Ascending aorta (tissue), 2 donors: ENCODE measurements at regions of chr14 and their contacts with region 1.

Region 1: GRCh38 chr14:32430326-32430725 is 101.2 kb downstream of the AKAP6 start:
- DNase-seq: no peak
- H3K4me3 ChIP-seq: no peak overlapping the region
- H3K27ac ChIP-seq: peak overlapping the region in 1 of 2 donors; percentile 85
- H3K4me1 ChIP-seq: peaks cover 0 to 4% of the 10 kb centered on the region in 2 donors
- H3K27me3 ChIP-seq: no peaks in the 10 kb centered on the region
- CTCF ChIP-seq: no peak

Region 2: DNA sequence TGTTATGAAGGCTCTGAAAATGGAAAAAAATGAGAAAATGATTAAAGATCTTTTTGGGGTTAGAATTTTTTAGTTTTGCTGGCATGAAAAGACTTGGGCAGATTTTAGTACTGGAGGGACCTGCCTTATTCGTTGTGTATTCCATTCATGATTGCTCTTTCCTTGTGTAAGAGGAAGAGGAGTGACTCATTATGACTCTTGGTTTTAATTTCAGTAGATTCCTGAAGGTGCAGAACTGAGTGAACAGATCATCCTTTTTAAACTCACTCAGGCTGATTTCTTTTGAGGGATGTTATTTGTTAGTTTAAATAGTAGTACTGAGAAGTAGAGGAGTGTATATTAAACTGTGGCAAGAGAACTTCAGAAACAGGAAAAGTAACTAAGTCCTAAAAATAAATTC is 59.6 kb before region 1 on chr14:
- intact Hi-C with region 1: loop called (anchors 5 kb)
- DNase-seq: no peak
- H3K4me3 ChIP-seq: no peak overlapping the region
- H3K27ac ChIP-seq: no peak overlapping the region
- H3K4me1 ChIP-seq: peaks cover 0 to 21% of the 10 kb centered on the region in 2 donors
- H3K27me3 ChIP-seq: no peaks in the 10 kb centered on the region
- CTCF ChIP-seq: no peak

Region 3: GRCh38 chr14:32417956-32418552 is 12.3 kb before region 1 on chr14:
- intact Hi-C with region 1: loop called (anchors 2 kb)
- DNase-seq: peak in 1 of 2 donors; percentile 72
- H3K4me3 ChIP-seq: no peak overlapping the region
- H3K27ac ChIP-seq: peak overlapping the region in 1 of 2 donors; percentile 13
- H3K4me1 ChIP-seq: peaks cover 0 to 12% of the 10 kb centered on the region in 2 donors
- H3K27me3 ChIP-seq: no peaks in the 10 kb centered on the region
- CTCF ChIP-seq: no peak

Region 4: GRCh38 chr14:32469388-32470160 is 39.2 kb after region 1 on chr14:
- intact Hi-C with region 1: loop called (anchors 5 kb)
- DNase-seq: no peak
- H3K4me3 ChIP-seq: no peak overlapping the region
- H3K27ac ChIP-seq: peak overlapping the region; percentile 65 to 83
- H3K4me1 ChIP-seq: peaks cover 5 to 35% of the 10 kb centered on the region in 2 donors
- H3K27me3 ChIP-seq: no peaks in the 10 kb centered on the region
- CTCF ChIP-seq: peak; percentile 23 to 59 (median 51)

Region 5: GRCh38 chr14:32495435-32495734 is 65.1 kb after region 1 on chr14:
- intact Hi-C with region 1: no loop called
- DNase-seq: no peak
- H3K4me3 ChIP-seq: peak overlapping the region; percentile 27 to 34
- H3K27ac ChIP-seq: peak overlapping the region; percentile 68 to 76
- H3K4me1 ChIP-seq: peaks cover 0 to 49% of the 10 kb centered on the region in 2 donors
- H3K27me3 ChIP-seq: no peaks in the 10 kb centered on the region
- CTCF ChIP-seq: no peak

Region 6: DNA sequence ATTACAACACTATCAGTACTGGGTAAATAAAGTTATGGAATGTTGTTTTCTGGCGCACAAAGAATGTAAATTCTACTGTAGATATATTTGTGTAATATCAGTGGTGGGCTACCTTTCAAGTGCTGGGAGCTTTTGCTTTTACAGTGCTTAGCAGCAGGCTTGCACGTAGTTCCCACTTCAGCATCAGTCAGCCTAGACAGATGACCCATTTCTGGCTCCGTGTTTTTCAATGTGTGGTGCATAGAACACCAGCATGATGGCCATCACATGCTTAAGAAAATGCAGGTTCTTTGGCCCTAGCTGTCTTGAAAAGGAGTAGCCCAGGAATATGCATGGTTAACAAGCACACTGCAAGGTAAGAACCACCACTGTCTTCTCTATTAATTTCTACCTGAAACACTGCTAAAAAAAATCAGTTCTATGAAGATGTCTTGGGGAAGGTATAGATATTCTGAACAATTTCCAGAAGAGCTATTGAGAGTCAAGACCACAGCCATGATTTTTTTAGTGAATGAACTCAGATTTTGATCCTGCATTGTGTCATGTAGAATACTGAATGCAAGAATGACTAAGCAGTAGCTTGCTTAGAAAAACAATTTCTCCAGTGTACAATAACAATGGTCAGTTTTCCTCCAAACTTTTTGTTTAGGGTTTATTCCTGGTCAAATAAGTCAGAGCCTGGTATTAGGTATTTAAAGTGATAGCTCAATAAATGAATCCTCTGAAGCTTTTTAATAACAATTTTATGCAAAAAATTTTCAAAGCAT is 94.5 kb after region 1 on chr14:
- intact Hi-C with region 1: no loop called
- DNase-seq: no peak
- H3K4me3 ChIP-seq: no peak overlapping the region
- H3K27ac ChIP-seq: peak overlapping the region in 1 of 2 donors; percentile 14
- H3K4me1 ChIP-seq: peaks cover 0 to 4% of the 10 kb centered on the region in 2 donors
- H3K27me3 ChIP-seq: no peaks in the 10 kb centered on the region
- CTCF ChIP-seq: no peak